MCF 10A (cell line): ENCODE measurements at regions of chr1 and their contacts with region 1.

Region 1: DNA sequence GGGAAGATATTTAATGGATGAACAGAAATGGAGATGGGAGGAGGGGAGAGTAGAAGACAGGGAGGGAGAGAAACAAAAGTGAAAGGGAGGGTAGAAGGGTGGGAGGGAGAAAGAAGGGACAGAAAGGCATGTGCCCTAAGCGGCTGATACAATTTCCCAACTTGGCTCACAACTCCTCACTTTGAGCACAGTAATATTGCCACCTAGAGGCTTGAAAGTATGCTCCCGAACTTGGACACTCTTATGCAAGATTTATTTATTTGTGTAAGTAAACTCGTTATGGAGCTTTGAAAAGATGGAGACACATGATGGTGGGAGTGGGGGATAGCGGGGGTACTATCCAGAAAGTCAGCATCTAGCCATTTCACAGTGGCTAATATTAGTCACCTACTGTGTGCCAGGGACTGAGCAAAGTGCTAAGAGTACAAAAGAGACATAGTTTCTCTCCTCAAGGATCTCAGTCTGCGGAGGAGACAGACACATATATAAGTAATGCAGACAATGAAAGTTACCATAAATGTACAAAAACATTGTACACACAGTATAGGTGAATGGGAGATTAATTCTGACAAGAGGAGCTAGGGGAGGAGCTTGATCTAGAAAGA is 189.7 kb downstream of the SEC16B start:
- DNase-seq: peak; percentile 70
- H3K4me3 Mint-ChIP-seq: no peak overlapping the region
- H3K27ac Mint-ChIP-seq: no peak overlapping the region
- H3K4me1 Mint-ChIP-seq: no peaks in the 10 kb centered on the region
- H3K27me3 Mint-ChIP-seq: peaks cover 34% of the 10 kb centered on the region
- CTCF ChIP-seq: peak; percentile 64

Region 2: GRCh38 chr1:176903474-176903873 is 876.7 kb before region 1 on chr1:
- CTCF ChIA-PET with region 1: interaction called, 35 read pairs
- POLR2A ChIA-PET with region 1: no interaction called
- intact Hi-C with region 1: no loop called
- DNase-seq: no peak
- H3K4me3 Mint-ChIP-seq: no peak overlapping the region
- H3K27ac Mint-ChIP-seq: no peak overlapping the region
- H3K4me1 Mint-ChIP-seq: peaks cover 7% of the 10 kb centered on the region
- H3K27me3 Mint-ChIP-seq: peaks cover 71% of the 10 kb centered on the region
- CTCF ChIP-seq: no peak

Region 3: GRCh38 chr1:177256153-177257075 is 523.8 kb before region 1 on chr1:
- CTCF ChIA-PET with region 1: interaction called, 3 read pairs
- POLR2A ChIA-PET with region 1: no interaction called
- intact Hi-C with region 1: loop called (anchors 2 kb)
- DNase-seq: peak; percentile 96
- H3K4me3 Mint-ChIP-seq: no peak overlapping the region
- H3K27ac Mint-ChIP-seq: no peak overlapping the region
- H3K4me1 Mint-ChIP-seq: peaks cover 21% of the 10 kb centered on the region
- H3K27me3 Mint-ChIP-seq: no peaks in the 10 kb centered on the region
- CTCF ChIP-seq: peak; percentile 70

Region 4: GRCh38 chr1:177355595-177355994 is 424.6 kb before region 1 on chr1:
- CTCF ChIA-PET with region 1: interaction called, 6 read pairs
- POLR2A ChIA-PET with region 1: no interaction called
- intact Hi-C with region 1: loop called (anchors 10 kb)
- DNase-seq: peak; percentile 70
- H3K4me3 Mint-ChIP-seq: no peak overlapping the region
- H3K27ac Mint-ChIP-seq: no peak overlapping the region
- H3K4me1 Mint-ChIP-seq: no peaks in the 10 kb centered on the region
- H3K27me3 Mint-ChIP-seq: peaks cover 22% of the 10 kb centered on the region
- CTCF ChIP-seq: peak; percentile 55

Region 5: GRCh38 chr1:177429263-177429662 is 350.9 kb before region 1 on chr1:
- CTCF ChIA-PET with region 1: interaction called, 3 read pairs
- POLR2A ChIA-PET with region 1: no interaction called
- intact Hi-C with region 1: loop called (anchors 5 kb)
- DNase-seq: peak; percentile 16
- H3K4me3 Mint-ChIP-seq: no peak overlapping the region
- H3K27ac Mint-ChIP-seq: no peak overlapping the region
- H3K4me1 Mint-ChIP-seq: no peaks in the 10 kb centered on the region
- H3K27me3 Mint-ChIP-seq: peaks cover 16% of the 10 kb centered on the region
- CTCF ChIP-seq: no peak

Region 6: DNA sequence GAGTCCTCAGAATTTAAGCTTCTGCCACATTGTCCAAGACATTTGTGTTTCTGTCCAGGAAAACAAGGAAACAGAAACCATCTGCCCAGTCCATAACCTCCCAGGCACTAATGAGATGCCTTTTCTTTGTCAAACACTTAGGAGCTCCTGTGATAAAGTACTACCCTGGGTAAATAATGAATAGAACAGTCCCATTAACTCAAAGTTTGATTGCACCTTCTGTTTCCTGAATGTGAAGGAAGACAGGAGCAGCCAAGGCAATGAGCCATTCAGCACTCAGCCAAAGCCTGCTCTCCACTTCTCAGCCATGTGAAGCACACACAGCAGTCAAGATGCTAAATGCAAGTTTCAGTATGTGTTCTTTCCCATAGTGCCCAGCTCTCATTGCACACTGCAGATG is 10.1 kb before region 1 on chr1:
- CTCF ChIA-PET with region 1: interaction called, 18 read pairs
- POLR2A ChIA-PET with region 1: no interaction called
- intact Hi-C with region 1: no loop called
- DNase-seq: no peak
- H3K4me3 Mint-ChIP-seq: no peak overlapping the region
- H3K27ac Mint-ChIP-seq: no peak overlapping the region
- H3K4me1 Mint-ChIP-seq: no peaks in the 10 kb centered on the region
- H3K27me3 Mint-ChIP-seq: peaks cover 14% of the 10 kb centered on the region
- CTCF ChIP-seq: no peak

Region 7: GRCh38 chr1:177794376-177794991 is 14.3 kb after region 1 on chr1:
- CTCF ChIA-PET with region 1: interaction called, 51 read pairs
- POLR2A ChIA-PET with region 1: interaction called, 4 read pairs
- intact Hi-C with region 1: no loop called
- DNase-seq: no peak
- H3K4me3 Mint-ChIP-seq: no peak overlapping the region
- H3K27ac Mint-ChIP-seq: no peak overlapping the region
- H3K4me1 Mint-ChIP-seq: no peaks in the 10 kb centered on the region
- H3K27me3 Mint-ChIP-seq: peaks cover 17% of the 10 kb centered on the region
- CTCF ChIP-seq: no peak